Psoas muscle (tissue), 8 donors: ENCODE measurements at regions of chr21 and their contacts with region 1.

Region 1: DNA sequence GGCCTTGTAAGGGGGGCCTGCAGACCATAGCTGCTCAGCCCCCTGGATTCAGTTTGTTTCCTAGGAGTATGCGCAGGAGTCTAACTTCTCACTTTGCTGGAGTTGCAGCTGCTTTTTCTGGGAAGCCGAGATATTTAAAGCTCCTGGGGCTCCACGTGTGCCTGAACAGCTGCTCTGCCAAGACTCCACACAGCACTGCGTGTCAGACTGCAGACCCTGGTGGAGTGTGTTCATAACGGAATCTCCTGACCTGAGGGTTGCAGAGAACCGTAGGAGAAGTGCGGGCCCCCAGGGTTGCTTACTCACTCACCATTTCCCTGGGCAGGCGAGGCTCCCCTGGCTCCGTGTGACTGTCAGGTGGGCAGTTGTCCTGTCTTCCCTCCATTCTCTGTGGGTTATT is 474.3 kb upstream of the TMPRSS15 start:
- DNase-seq: no peak
- ATAC-seq: no peak
- H3K4me3 ChIP-seq: no peak overlapping the region
- H3K27ac ChIP-seq: no peak overlapping the region
- H3K4me1 ChIP-seq: no peaks in the 10 kb centered on the region
- H3K27me3 ChIP-seq: no peaks in the 10 kb centered on the region
- CTCF ChIP-seq: no peak

Region 2: DNA sequence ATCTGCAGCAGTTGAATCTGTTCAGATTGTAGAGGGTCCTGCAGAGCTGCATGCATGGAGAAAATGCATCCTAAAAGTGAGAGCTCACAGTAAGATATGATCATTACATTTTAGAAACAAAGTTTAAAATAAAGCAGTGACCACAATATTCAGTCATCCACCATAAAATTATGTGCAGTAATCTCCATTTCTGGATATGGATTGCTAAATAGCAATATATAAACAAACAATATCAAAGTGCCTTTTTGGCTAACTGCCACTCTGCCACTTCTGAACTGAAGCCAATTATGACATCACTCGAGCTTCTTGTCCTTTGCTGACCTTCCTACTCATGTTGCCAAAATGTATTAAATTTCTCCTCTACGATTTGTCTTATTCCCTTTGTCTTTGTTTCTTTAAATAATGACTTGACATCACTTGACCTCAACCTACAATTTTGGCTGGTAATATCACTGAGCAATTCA is 1627.1 kb before region 1 on chr21:
- intact Hi-C with region 1: loop called in 1 of 2 experiments (anchors 5 kb)
- DNase-seq: no peak
- ATAC-seq: no peak
- H3K4me3 ChIP-seq: no peak overlapping the region
- H3K27ac ChIP-seq: no peak overlapping the region
- H3K4me1 ChIP-seq: no peaks in the 10 kb centered on the region
- H3K27me3 ChIP-seq: no peaks in the 10 kb centered on the region
- CTCF ChIP-seq: no peak

Region 3: GRCh38 chr21:18951271-18952065 is 73.6 kb after region 1 on chr21:
- intact Hi-C with region 1: no loop called
- DNase-seq: no peak
- ATAC-seq: no peak
- H3K4me3 ChIP-seq: no peak overlapping the region
- H3K27ac ChIP-seq: no peak overlapping the region
- H3K4me1 ChIP-seq: no peaks in the 10 kb centered on the region
- H3K27me3 ChIP-seq: no peaks in the 10 kb centered on the region
- CTCF ChIP-seq: no peak